AG04450 (cell line): ENCODE measurements at regions of chr21 and their contacts with region 1.

Region 1: DNA sequence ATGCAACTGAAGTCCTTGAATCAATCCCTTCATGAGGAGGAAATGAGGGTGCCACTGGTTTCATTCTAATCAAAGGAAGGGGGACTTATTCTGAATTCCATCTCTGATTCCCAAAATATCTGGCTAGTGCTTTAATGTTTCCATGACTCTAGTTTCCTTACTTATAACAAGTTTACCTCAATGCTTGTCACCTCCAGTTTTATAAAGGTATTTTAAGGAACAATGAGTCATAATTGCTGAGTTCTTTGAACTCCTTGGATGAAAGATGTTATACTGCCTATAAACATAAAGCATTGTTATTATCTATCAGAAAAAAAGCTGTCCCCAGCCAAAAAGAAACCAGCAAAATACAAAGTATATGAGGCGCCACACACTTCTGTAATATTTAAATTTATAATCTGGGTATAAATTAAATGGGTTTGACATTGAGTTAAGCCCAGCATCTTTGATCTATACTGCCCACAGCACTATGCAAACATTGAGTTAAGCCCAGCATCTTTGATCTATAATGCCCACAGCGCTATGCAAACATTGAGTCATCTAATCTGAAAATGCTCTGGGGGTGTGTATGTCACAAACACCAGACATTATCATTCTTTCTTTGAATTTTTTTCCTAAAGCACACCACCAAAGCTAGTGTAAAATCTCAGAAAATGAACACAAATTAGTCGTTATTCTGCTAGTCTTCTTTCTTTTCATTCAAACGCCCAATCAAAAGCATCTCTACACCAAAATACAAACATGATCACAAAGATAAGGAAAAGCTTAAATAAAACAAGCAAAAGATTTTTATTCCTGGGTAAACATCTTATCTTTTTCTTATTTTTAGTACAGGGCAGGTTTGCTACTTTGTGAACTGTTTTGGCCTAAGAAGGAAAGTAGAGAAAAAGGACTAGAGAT is 11.5 kb upstream of the CXADR start:
- DNase-seq: no peak
- H3K4me3 ChIP-seq: no peak overlapping the region
- H3K27ac ChIP-seq: no peak overlapping the region
- H3K27me3 ChIP-seq: peaks cover 3% of the 10 kb centered on the region
- CTCF ChIP-seq: no peak

Region 2: GRCh38 chr21:17482928-17483327 is 18.4 kb before region 1 on chr21:
- CTCF ChIA-PET with region 1: no interaction called
- POLR2A ChIA-PET with region 1: no interaction called
- DNase-seq: no peak
- H3K4me3 ChIP-seq: no peak overlapping the region
- H3K27ac ChIP-seq: no peak overlapping the region
- H3K27me3 ChIP-seq: no peaks in the 10 kb centered on the region
- CTCF ChIP-seq: no peak

Region 3: DNA sequence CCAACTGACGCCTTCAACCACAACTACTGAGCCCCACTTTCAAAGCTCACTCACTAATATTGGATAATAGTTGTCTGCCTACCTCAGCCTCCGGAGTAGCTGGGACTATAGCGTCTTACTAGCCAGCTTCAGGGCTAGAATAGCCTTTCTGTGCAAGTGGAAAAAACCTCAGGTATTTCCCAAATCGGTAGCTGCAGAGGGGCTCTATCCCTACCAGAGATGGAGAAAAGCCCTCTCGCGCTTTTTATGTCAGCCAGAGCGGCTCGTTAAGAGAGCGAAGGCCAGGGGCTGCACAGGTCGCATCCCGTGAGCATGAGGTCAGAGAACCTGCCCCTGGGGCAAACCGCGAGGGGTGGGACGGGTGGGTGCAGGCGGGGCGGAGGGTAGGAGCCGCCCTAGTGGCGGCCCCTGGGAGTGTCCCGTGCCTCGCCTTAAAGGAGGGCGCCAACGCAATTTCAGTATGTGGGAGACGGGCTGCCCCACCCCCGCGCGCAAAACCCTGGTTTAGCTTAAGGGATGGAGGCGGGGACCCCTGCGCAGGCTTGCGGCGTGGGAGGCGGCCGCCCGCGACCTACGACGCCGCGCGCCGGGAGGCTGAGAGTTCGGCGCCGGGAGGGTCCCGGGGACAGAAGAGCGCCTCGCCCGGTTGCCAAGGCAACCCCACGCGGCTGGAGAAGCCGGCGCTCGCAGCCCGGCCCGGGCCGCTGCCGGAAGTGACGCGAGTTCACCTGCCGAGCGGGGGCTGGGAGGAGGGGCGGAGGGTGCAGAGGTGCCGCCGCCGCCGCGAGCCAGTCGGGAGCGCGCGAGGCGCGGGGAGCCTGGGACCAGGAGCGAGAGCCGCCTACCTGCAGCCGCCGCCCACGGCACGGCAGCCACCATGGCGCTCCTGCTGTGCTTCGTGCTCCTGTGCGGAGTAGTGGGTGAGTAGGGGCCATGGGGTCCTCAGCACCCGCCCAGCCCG is 11.2 kb after region 1 on chr21 and contains the start of gene CXADR:
- CTCF ChIA-PET with region 1: interaction called, 14 read pairs
- POLR2A ChIA-PET with region 1: no interaction called
- DNase-seq: no peak
- H3K4me3 ChIP-seq: peak within 1 kb of the TSS; percentile 69
- H3K27ac ChIP-seq: no peak within 1 kb of the TSS
- H3K27me3 ChIP-seq: peaks cover 15% of the 10 kb centered on the region
- CTCF ChIP-seq: peak; percentile 50
- polyA plus RNA-seq, gene CXADR: 0.67 and 0.99 TPM in 2 replicates

Region 4: GRCh38 chr21:17746912-17747311 is 245.6 kb after region 1 on chr21:
- CTCF ChIA-PET with region 1: no interaction called
- POLR2A ChIA-PET with region 1: no interaction called
- DNase-seq: no peak
- H3K4me3 ChIP-seq: no peak overlapping the region
- H3K27ac ChIP-seq: no peak overlapping the region
- H3K27me3 ChIP-seq: no peaks in the 10 kb centered on the region
- CTCF ChIP-seq: no peak